GM12878 (cell line): ENCODE measurements at regions of chr6 and their contacts with region 1.

Region 1: GRCh38 chr6:130322673-130323268 is 43.0 kb upstream of the TMEM200A start:
- DNase-seq: peak; percentile 17
- ATAC-seq: peak; percentile 79
- H3K4me3 ChIP-seq: no peak overlapping the region
- H3K27ac ChIP-seq: no peak overlapping the region
- H3K4me1 ChIP-seq: no peaks in the 10 kb centered on the region
- H3K27me3 ChIP-seq: no peaks in the 10 kb centered on the region
- CTCF ChIP-seq: peak; percentile 78 to 93 (median 86); a peak in 5 of 6 replicates
- EP300 ChIP-seq: no peak
- POLR2A ChIP-seq: no peak
- RAD21 ChIP-seq: peak; percentile 95

Region 2: GRCh38 chr6:130167655-130168054 is 155.1 kb before region 1 on chr6:
- CTCF ChIA-PET with region 1: no interaction called
- POLR2A ChIA-PET with region 1: no interaction called
- RAD21 ChIA-PET with region 1: no interaction called
- SMC1A ChIA-PET with region 1: no interaction called
- in situ Hi-C with region 1: no loop called
- intact Hi-C with region 1: no loop called
- DNase-seq: no peak
- ATAC-seq: no peak
- H3K4me3 ChIP-seq: no peak overlapping the region
- H3K27ac ChIP-seq: no peak overlapping the region
- H3K4me1 ChIP-seq: no peaks in the 10 kb centered on the region
- H3K27me3 ChIP-seq: no peaks in the 10 kb centered on the region; a peak in 1 of 4 replicates
- CTCF ChIP-seq: no peak
- EP300 ChIP-seq: no peak
- POLR2A ChIP-seq: no peak
- RAD21 ChIP-seq: no peak

Region 3: DNA sequence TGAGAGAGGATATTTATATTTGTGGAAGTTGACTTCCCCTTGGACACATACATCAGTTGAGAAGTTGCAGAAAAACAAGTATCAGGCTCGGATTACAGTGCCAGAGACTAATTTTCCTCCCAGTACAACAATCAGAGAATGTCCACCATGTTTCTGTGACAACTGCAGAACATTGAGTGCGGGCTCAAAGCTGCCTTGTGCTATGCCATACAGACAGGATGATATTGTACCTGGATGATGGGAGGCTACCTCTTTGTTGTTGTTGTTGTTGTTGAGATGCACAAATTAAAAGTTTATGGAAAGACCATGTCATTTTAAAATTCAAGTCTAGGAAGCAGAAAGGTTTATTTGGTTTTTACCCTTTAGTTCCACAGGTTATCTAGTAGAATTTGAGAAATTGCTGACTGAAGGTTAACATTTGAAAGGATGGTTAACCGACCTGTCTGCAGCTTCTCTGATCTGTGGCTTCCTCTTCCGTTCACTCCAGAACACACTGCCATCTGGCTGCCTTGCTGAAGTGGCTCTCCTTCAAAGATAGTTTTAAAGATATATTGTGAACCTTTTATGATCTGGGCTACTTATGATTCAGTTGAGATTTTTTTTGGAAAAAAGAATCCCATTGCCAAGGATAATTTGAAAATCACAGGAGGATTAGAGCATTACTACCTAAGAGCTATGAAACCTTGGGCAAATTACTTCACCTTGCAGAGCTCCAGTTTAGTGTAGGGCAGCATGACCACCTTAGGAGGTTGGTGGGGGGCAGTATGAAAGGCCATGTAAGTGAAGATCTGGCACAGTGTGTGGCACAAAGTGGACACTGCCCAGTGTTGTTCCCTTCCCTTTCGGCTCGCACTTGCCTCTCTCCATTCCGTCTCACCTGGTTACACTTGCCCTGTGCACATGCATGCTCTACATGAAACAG is 58.9 kb after region 1 on chr6:
- CTCF ChIA-PET with region 1: interaction called, 11 read pairs
- POLR2A ChIA-PET with region 1: no interaction called
- RAD21 ChIA-PET with region 1: interaction called, 13 read pairs
- SMC1A ChIA-PET with region 1: interaction called, 12 read pairs
- in situ Hi-C with region 1: no loop called
- intact Hi-C with region 1: no loop called
- DNase-seq: no peak
- ATAC-seq: peak; percentile 84
- H3K4me3 ChIP-seq: no peak overlapping the region
- H3K27ac ChIP-seq: no peak overlapping the region
- H3K4me1 ChIP-seq: no peaks in the 10 kb centered on the region
- H3K27me3 ChIP-seq: no peaks in the 10 kb centered on the region
- CTCF ChIP-seq: peak; percentile 12 to 32 (median 12); a peak in 3 of 6 replicates
- EP300 ChIP-seq: no peak
- POLR2A ChIP-seq: no peak
- RAD21 ChIP-seq: peak; percentile 30; the same call in 1 of the 2 replicates

Region 4: DNA sequence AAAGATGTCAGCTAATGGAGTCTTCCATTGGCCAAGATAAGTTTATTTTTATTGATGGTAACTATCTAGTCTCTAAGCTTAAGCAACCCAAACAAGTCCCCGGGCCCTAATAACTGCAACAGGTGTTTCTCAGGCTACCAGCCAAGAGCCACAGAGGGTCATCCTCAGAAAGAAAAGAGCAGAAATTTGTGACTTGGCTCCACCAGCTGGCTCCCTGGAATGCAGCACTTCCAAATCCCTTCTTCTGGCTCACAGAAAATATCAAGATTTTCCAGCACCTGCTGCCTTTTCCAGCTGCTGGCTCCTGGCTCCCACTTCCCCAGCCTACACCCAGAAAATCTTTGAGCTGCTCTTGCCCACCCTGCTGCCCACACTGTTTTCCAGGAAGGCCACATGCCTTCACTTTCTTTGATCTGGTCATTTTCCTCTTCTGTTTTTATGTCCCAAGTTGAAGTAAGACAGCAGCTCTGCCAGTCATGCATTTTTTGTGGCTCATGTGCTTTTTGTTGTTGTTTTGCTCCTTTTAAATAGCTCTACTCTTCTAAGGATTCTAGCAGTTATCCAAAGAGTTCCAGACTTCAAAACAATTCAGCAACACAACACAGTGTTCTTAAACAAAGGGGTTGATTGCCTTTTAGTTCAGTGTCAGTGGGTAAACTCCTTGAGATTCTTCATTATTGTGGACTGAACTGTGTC is 353.5 kb after region 1 on chr6:
- CTCF ChIA-PET with region 1: interaction called, 7 read pairs
- POLR2A ChIA-PET with region 1: no interaction called
- RAD21 ChIA-PET with region 1: interaction called, 10 read pairs
- SMC1A ChIA-PET with region 1: interaction called, 7 read pairs
- in situ Hi-C with region 1: no loop called
- intact Hi-C with region 1: no loop called
- DNase-seq: no peak
- ATAC-seq: no peak; the same call in 2 of the 3 replicates
- H3K4me3 ChIP-seq: no peak overlapping the region
- H3K27ac ChIP-seq: no peak overlapping the region
- H3K4me1 ChIP-seq: no peaks in the 10 kb centered on the region; the same call in 1 of the 2 replicates
- H3K27me3 ChIP-seq: no peaks in the 10 kb centered on the region
- CTCF ChIP-seq: peak in 1 of 3 experiments; percentile 31; a peak in 2 of 6 replicates
- EP300 ChIP-seq: no peak
- POLR2A ChIP-seq: no peak
- RAD21 ChIP-seq: peak; percentile 40; the same call in 1 of the 2 replicates

Region 5: GRCh38 chr6:130843575-130844320 is 521.0 kb after region 1 on chr6:
- CTCF ChIA-PET with region 1: interaction called, 13 read pairs
- POLR2A ChIA-PET with region 1: no interaction called
- RAD21 ChIA-PET with region 1: interaction called, 10 read pairs
- SMC1A ChIA-PET with region 1: interaction called, 6 read pairs
- in situ Hi-C with region 1: loop called (anchors 5 kb)
- intact Hi-C with region 1: loop called (anchors 1 kb)
- DNase-seq: peak; percentile 9
- ATAC-seq: peak; percentile 86
- H3K4me3 ChIP-seq: no peak overlapping the region
- H3K27ac ChIP-seq: no peak overlapping the region
- H3K4me1 ChIP-seq: no peaks in the 10 kb centered on the region
- H3K27me3 ChIP-seq: no peaks in the 10 kb centered on the region
- CTCF ChIP-seq: peak; percentile 49 to 75 (median 62); a peak in 5 of 6 replicates
- EP300 ChIP-seq: no peak
- POLR2A ChIP-seq: no peak
- RAD21 ChIP-seq: peak; percentile 84

Region 6: DNA sequence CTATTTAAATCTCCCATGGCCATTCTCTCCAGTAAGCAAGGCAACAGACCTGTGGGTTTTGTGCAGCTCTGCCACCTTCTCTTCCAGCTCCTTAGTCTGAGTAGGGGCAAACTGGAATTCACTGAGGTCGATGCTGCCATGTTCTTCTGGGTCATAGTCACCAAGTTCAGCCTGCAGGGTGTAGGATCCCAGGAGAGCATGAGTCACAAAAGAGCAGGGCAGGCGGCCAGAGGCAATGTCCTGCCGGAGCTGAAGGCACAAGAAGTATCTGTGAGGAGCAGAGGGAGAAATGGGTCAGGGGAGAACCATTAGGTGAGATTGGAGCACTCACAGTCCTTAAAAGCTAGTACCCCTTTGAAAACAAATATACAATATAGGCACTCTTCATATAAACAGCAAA is 578.1 kb after region 1 on chr6:
- CTCF ChIA-PET with region 1: no interaction called
- POLR2A ChIA-PET with region 1: no interaction called
- RAD21 ChIA-PET with region 1: no interaction called
- SMC1A ChIA-PET with region 1: no interaction called
- in situ Hi-C with region 1: no loop called
- intact Hi-C with region 1: no loop called
- DNase-seq: no peak
- ATAC-seq: no peak
- H3K4me3 ChIP-seq: no peak overlapping the region
- H3K27ac ChIP-seq: no peak overlapping the region
- H3K4me1 ChIP-seq: no peaks in the 10 kb centered on the region
- H3K27me3 ChIP-seq: no peaks in the 10 kb centered on the region
- CTCF ChIP-seq: no peak
- EP300 ChIP-seq: no peak
- POLR2A ChIP-seq: no peak
- RAD21 ChIP-seq: no peak